OCI-LY7 (cell line): ENCODE measurements at regions of chr6 and their contacts with region 1.

Region 1: DNA sequence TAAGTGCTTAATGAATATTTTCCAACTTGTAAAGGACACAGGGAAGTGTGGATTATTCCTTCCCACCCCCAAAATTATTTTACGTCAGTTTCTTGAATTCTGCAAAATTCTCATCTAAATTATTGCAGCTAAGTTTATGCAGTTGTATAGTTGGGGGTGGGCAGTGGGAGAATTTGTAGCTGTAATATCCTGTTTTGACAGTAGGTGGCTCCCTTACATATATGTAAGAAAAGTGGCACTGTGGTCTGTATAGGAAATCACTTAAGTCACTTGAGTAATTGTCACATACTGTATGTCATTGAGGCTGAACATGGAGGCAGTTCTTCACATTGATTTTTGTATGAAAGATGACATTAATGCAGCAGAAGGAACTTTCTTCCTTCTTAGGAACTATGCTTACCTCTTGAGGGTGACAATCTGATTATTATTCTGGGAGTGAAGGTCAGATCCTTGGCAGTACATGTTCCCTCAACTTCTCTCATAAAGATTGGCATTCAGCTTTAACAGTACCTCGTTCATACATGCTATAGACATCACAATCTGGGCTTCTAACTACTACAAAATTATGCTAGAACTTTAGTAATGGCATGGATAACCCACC is 14.7 kb upstream of the CFAP206 start:
- DNase-seq: peak; percentile 88
- H3K4me3 ChIP-seq: no peak overlapping the region
- H3K27ac ChIP-seq: no peak overlapping the region
- H3K4me1 ChIP-seq: peaks cover 19% of the 10 kb centered on the region
- CTCF ChIP-seq: peak; percentile 94

Region 2: DNA sequence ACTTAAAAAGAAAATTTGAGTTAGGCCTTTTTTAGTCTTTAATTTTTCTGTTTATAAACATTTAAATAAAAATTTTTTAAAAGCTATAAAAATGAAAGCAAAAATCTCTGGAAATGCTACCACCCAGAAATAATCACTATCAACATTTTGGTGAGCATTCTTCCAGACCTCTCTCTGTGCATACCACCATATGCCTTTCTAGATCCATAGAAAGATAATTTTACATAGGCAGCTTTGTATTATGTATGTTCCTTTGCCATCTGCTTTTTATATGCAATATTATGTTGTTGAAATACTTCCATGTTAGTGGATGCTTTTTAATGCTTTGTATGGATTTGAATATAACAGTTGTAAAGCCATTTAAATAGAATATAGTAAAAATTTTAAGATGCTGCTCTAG is 952.5 kb before region 1 on chr6:
- CTCF ChIA-PET with region 1: no interaction called
- POLR2A ChIA-PET with region 1: no interaction called
- intact Hi-C with region 1: no loop called
- DNase-seq: no peak
- H3K4me3 ChIP-seq: no peak overlapping the region
- H3K27ac ChIP-seq: no peak overlapping the region
- H3K4me1 ChIP-seq: no peaks in the 10 kb centered on the region
- CTCF ChIP-seq: no peak

Region 3: GRCh38 chr6:87066449-87067333 is 326.4 kb before region 1 on chr6:
- CTCF ChIA-PET with region 1: no interaction called
- POLR2A ChIA-PET with region 1: interaction called, 3 read pairs
- intact Hi-C with region 1: loop called (anchors 1 kb)
- DNase-seq: peak; percentile 78
- H3K4me3 ChIP-seq: peak overlapping the region; percentile 61
- H3K27ac ChIP-seq: no peak overlapping the region
- H3K4me1 ChIP-seq: peaks cover 6% of the 10 kb centered on the region
- CTCF ChIP-seq: peak; percentile 93

Region 4: DNA sequence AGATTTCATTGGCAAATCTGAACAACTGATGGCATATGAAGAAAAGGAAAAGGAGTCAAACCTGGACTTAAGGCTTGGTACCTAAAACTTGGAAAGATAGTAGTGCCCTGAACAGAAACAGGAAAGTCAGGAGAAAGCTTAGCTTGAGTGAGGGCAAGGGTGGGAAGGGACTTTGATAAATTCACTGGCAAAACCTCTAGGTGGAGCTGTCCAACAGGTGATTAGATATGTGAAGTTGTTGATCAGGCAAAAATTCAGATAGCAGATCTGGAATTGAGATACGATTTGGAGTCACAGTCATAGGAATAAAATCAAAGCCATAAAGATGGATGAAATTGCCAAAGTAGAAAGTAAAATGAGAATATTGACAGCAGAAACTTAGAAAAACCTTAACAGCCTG is 253.9 kb before region 1 on chr6:
- CTCF ChIA-PET with region 1: interaction called, 3 read pairs
- POLR2A ChIA-PET with region 1: interaction called, 3 read pairs
- intact Hi-C with region 1: loop called (anchors 1 kb)
- DNase-seq: peak; percentile 67
- H3K4me3 ChIP-seq: no peak overlapping the region
- H3K27ac ChIP-seq: no peak overlapping the region
- H3K4me1 ChIP-seq: no peaks in the 10 kb centered on the region
- CTCF ChIP-seq: peak; percentile 90

Region 5: DNA sequence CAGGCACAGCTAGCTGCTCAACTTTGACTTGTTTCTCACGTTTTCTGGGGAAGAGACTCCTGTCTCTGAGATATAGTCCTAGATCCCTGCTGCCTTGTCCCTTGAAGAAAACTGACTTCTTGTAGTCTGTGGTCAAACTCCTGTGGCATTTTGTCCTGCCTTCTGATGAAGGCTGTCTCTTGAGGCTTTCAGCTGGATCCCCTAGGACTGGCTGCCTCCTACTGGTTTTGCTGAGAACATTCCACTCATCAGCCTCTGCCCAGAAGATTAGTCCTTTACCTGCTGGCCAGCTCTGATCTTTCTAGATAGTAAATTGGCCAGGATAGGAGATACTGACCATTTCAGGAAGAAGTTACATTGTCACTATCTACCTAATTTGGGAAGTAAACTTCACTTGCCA is 844.9 kb after region 1 on chr6:
- CTCF ChIA-PET with region 1: no interaction called
- POLR2A ChIA-PET with region 1: no interaction called
- intact Hi-C with region 1: loop called (anchors 10 kb)
- DNase-seq: peak; percentile 74
- H3K4me3 ChIP-seq: no peak overlapping the region
- H3K27ac ChIP-seq: no peak overlapping the region
- H3K4me1 ChIP-seq: peaks cover 17% of the 10 kb centered on the region
- CTCF ChIP-seq: peak; percentile 88

Region 6: GRCh38 chr6:88870717-88871330 is 1477.7 kb after region 1 on chr6:
- CTCF ChIA-PET with region 1: no interaction called
- POLR2A ChIA-PET with region 1: no interaction called
- intact Hi-C with region 1: loop called (anchors 5 kb)
- DNase-seq: peak; percentile 79
- H3K4me3 ChIP-seq: no peak overlapping the region
- H3K27ac ChIP-seq: no peak overlapping the region
- H3K4me1 ChIP-seq: peaks cover 16% of the 10 kb centered on the region
- CTCF ChIP-seq: peak; percentile 96